Activated T-helper 2 cell treated with anti-CD3 and anti-CD28 coated beads, Interferon-gamma antibody, Interleukin-2, Interleukin-4, amounts not matched to agents 10 μg/mL and 5 μg/mL and 100 μg/mL, durations not matched to agents 14 hours and 24 hours and 36 hours (primary cell): ENCODE measurements at regions of chr20 and their contacts with region 1.

Region 1: GRCh38 chr20:53750827-53751619 is 157.4 kb upstream of the ZNF217 start:
- DNase-seq: peak; percentile 59
- H3K4me3 Mint-ChIP-seq: peak overlapping the region; percentile 59
- H3K27ac Mint-ChIP-seq: peak overlapping the region; percentile 99
- H3K4me1 Mint-ChIP-seq: peaks cover 63% of the 10 kb centered on the region
- H3K27me3 Mint-ChIP-seq: no peaks in the 10 kb centered on the region

Region 2: GRCh38 chr20:53660078-53660909 is 90.7 kb before region 1 on chr20:
- intact Hi-C with region 1: loop called (anchors 2 kb)
- DNase-seq: no peak
- H3K4me3 Mint-ChIP-seq: peak overlapping the region; percentile 77
- H3K27ac Mint-ChIP-seq: peak overlapping the region; percentile 84
- H3K4me1 Mint-ChIP-seq: peaks cover 55% of the 10 kb centered on the region
- H3K27me3 Mint-ChIP-seq: no peaks in the 10 kb centered on the region

Region 3: GRCh38 chr20:53677447-53678314 is 73.3 kb before region 1 on chr20:
- intact Hi-C with region 1: no loop called
- DNase-seq: no peak
- H3K4me3 Mint-ChIP-seq: peak overlapping the region; percentile 48
- H3K27ac Mint-ChIP-seq: peak overlapping the region; percentile 89
- H3K4me1 Mint-ChIP-seq: peaks cover 26% of the 10 kb centered on the region
- H3K27me3 Mint-ChIP-seq: no peaks in the 10 kb centered on the region

Region 4: DNA sequence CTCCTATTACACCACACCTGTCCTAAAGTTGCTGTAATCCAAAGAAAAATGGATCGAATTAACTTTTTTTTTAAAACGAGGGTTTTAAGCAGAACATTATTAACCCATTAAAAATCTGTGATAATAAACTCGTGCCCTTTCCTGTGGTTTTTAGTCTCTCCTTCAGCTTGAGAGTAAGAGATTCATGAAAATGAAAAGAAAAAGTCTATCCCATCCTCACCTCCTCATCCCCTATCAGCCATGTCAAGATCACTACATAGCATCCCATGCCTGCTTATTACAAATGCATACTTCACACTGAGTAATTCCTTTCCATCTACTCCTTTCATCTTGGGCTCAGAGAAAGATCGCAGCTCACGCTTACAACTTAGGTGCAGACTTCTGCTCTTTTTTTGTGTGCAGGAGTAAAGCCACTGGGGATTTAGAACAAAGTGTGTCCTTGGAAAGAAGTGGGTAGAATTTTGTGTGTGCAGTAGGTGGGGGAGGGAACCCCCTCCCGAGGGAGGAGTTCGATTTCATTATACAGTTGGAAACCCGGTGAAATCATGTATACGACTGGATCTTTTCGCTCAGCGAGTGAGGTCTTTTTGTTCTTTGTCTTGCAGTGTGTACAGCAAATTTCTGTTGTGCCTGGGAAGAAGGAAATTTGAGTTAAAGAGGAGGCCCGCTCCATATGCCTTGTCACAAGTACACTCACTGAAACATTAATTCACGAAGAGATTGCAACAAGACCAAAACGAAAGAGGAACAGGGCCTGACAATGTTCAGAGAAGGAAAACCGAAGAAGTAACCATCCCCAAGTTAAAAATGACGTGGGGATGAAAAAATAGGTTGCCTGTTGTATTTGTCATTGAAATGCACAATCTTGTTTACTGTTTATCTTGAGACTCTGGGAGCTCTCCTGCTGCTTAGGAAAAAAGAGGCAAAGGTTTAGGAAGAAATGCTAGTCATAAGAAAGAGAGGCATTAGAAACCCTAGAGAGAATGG is 10.9 kb before region 1 on chr20:
- intact Hi-C with region 1: loop called (anchors 1 kb)
- DNase-seq: no peak
- H3K4me3 Mint-ChIP-seq: peak overlapping the region; percentile 82
- H3K27ac Mint-ChIP-seq: peak overlapping the region; percentile 96
- H3K4me1 Mint-ChIP-seq: peaks cover 44% of the 10 kb centered on the region
- H3K27me3 Mint-ChIP-seq: no peaks in the 10 kb centered on the region

Region 5: DNA sequence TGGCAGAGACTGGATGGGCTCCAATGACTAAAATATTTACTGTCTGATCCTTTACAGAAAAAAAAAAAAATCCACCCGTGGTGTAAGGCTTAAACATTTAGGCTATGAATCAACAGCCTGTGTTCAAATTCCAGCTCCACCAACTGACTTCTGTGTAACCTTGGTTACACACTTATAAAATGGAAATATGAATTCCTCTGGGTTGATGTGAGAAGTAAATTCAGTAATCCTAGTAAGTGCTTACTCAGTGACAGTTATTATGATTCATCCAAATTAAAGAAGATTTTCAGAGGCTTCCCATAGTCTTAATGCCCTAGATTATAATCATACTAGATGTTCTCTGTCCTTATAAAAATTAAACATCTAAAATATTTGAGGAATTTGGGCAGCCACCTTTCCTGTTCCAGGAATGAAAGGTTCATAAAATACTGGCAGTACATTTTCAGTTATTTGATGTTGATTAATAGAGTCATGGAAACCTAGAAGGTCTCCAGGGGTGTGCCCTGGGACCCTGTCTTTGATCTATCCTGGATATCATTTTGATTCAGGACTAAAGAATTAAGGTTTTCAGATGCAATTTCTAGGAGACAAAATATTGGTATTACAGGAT is 22.9 kb after region 1 on chr20:
- intact Hi-C with region 1: no loop called
- DNase-seq: no peak
- H3K4me3 Mint-ChIP-seq: no peak overlapping the region
- H3K27ac Mint-ChIP-seq: no peak overlapping the region
- H3K4me1 Mint-ChIP-seq: peaks cover 5% of the 10 kb centered on the region
- H3K27me3 Mint-ChIP-seq: no peaks in the 10 kb centered on the region

Region 6: GRCh38 chr20:53891306-53891944 is 140.4 kb after region 1 on chr20:
- intact Hi-C with region 1: loop called (anchors 1 kb)
- DNase-seq: no peak
- H3K4me3 Mint-ChIP-seq: no peak overlapping the region
- H3K27ac Mint-ChIP-seq: no peak overlapping the region
- H3K4me1 Mint-ChIP-seq: peaks cover 45% of the 10 kb centered on the region
- H3K27me3 Mint-ChIP-seq: no peaks in the 10 kb centered on the region

Region 7: DNA sequence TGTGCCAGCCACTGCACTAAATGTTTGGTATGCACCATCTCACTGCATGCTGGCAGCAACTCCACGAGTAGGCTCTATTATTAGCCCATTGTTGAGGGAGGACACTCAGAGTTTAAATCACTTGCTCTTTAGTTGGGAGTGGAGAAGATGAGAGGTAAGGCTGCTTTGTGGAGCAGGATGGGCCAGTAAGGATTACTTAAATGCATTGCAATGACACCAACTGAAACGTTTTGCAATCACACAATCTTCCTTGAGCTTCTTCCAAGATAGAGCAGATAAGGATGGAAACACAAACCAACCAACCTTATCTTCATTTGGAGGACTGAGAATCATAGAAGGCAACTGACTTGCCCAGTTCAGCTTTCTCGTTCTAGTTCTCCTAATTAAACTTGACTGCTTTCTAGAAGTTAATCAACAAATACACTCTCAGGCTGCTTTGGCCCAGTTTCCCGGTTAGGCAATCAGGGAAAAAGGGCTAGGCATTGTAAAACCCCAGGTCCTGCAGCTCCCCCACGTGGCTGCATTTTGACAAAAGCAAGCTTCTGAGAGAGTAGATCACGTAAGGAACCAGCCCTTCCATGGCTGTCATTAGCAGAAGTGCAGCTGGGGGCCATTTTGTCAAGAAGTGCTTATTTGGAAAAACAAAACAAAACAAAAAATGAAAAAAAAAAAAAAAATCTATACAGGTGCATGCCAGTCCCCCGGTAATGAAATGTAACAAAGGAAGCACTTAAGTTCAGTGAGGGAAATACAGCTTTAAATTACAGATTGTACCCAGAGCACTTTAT is 188.7 kb after region 1 on chr20:
- intact Hi-C with region 1: loop called (anchors 5 kb)
- DNase-seq: peak; percentile 63
- H3K4me3 Mint-ChIP-seq: no peak overlapping the region
- H3K27ac Mint-ChIP-seq: no peak overlapping the region
- H3K4me1 Mint-ChIP-seq: peaks cover 43% of the 10 kb centered on the region
- H3K27me3 Mint-ChIP-seq: no peaks in the 10 kb centered on the region